GM10248 (cell line): ENCODE measurements at regions of chr4 and their contacts with region 1.

Region 1: DNA sequence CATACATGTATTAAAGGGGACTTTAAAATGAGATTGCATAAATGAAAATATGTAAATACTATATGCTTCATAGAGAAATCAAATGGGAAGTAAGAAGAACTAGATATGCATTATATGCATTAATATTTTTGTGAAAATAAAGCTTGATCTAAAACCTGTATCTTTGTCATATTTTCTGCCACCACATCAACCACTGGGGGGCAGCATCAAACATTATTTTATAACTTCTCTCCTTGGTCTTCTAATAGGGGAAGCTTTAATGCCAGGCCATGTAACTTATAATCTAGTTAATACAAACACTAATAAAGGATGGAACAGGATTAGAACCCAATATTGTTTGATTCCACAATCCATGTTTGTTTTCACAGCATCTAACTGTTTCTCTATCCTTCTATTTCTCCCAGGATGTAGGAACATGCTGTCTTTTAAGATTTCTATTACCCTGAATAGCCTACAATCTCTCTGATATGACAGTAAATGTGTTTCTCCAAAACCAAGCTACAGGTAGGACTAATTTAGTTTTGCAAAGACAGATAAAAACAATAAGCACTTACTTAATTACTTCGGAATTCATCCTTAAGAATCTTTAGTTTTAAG is 10.0 kb downstream of the QRFPR start:
- DNase-seq: peak; percentile 32
- CTCF ChIP-seq: peak; percentile 72

Region 2: DNA sequence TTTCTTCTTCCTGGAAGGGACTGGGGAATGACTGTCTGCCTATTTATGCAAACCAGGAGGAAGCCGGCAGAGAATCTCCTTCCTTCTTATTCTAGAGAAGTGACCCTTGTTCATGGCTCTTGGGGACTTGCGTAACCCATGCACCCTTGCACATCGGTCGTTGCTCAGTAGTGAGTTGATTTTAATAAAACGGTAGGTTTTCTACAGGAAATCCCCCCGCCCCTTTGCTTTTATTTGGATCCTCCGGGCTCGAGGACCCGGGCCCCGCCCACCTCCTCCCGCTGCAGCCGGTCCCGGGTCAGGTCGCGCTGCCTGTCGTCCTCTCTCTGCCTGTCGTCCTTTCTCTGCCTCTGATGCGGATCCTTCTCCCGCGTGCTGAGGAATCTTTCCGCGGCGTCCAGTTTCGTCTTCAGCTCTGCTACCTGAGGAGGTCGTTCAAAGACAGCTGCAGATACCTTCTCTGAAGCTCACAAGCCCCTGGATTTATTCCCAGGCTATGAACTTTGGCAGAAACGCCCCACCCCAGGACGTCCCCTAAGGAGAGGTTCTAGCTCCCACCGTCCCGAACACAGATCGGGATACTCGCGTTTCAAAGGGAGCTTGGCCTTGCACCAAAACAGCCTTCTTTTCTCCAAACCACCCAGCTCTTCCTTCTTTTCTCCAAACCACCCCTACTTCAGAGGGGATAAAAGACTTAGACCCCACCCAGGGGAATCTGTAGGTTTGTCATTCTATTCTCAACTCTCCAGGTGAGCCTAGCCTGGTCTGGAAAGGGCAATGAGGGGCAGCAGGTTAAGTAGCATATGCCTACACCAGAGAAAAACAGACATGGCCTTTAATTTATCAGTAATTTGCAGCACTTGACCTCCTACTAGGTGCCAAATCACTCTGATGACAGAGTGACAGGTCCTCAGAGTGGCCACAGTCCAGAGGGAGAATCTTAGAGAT is 213.7 kb before region 1 on chr4:
- CTCF ChIA-PET with region 1: no interaction called
- POLR2A ChIA-PET with region 1: no interaction called
- DNase-seq: peak; percentile 15
- CTCF ChIP-seq: no peak

Region 3: DNA sequence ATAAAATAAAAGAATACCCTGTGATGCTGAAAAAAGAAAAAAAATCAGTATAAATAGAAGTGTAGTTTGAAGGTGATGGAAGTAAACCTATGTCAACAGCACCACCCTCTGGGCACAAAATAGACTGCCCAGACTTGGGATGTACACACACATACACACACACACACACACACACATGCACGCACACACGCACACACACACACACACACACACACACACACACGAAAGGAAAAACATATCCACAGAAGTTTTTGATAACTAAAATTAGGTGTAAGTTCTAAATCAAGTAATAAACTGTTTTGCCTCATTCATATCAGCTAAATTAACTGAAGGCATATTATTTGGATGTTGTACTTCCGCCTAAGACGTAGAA is 285.4 kb after region 1 on chr4:
- CTCF ChIA-PET with region 1: interaction called, 42 read pairs
- POLR2A ChIA-PET with region 1: no interaction called
- DNase-seq: peak; percentile 13
- CTCF ChIP-seq: peak; percentile 47

Region 4: DNA sequence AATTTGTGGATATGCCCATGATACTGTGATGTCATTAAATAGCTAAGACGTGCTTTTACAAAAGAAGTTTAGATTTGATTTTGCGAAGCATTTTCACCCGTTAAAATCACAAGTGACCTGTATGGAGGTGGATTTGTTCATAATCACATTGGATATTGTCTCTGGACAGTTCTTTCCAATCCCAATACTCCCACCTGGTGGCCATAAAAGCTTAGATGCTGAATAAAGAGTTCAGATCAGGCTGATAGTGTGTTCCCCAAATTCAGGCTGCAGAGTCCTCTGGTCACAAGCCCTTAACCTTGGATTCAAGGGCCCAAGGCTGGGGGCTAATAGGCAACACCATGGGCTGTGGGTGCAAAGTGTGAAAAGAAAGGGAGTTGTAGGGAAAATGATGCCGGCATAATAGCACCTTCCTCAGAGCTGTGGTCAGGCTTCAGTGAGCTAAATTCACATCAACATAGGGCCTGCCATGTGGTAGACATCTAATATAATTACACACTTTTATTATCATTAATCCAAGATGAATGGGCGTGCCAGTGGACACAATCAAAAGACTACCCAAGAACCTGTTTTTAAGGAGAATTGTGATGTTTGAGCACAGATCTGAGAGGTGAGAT is 366.0 kb after region 1 on chr4:
- CTCF ChIA-PET with region 1: interaction called, 13 read pairs
- POLR2A ChIA-PET with region 1: no interaction called
- DNase-seq: peak; percentile 26
- CTCF ChIP-seq: peak; percentile 9